ENCODE measurements at regions of chrX and their contacts with region 1.

Region 1: DNA sequence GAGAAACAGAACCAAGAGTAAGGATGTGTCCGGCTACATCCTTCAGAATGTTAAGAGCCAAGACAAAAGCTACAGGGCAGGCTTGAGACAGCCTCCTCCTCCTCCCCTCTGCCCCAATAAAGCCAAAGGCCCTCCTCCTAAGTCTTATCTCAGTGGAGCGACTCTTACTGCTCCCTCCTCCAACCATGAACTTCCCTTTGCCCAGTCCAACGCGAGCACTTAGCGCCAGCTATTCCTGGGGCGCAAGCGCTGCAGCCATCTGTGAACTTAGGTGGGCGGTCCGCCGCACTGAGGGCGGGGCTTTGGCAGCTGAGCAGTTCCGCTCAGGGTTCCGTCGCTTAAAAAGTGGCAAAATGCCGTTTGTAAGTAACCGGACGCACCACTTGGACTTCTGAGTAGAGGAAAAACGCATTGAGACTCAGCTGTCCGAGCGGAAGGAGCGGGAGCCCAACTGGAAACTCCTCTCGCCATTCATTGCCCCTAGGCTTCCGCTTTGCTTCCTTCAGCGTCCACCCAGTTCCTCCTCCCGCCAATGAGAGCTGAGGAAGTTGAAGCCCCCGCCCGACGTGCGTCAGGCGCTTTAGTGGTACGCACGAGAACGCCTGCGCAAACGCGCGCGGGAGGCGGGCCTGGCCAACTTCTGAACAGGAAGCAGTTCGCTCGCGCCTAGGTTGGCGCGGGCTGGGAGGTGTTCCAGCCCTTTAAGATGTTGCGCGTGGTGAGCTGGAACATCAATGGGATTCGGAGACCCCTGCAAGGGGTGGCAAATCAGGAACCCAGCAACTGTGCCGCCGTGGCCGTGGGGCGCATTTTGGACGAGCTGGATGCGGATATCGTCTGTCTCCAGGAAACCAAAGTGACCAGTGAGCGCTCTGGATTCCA is at the start of gene APEX2:
- DNase-seq: peak; percentile 89 to 97
- H3K4me3 ChIP-seq: peak within 1 kb of the TSS; percentile 51 to 58 (median 54)
- H3K27ac ChIP-seq: peak within 1 kb of the TSS; percentile 79 to 92 (median 89)
- H3K4me1 ChIP-seq: peaks cover 0 to 11% (median 4%) of the 10 kb centered on the region in 4 donors
- H3K27me3 ChIP-seq: no peaks in the 10 kb centered on the region
- CTCF ChIP-seq: no peak
- EP300 ChIP-seq: no peak
- POLR2A ChIP-seq: peak in 2 of 4 donors; percentile 22 to 31
- total RNA-seq, gene APEX2: 0.29 to 8.5 (median 7.5) TPM

Region 2: GRCh38 chrX:54798137-54798536 is 201.8 kb before region 1 on chrX and contains the start of gene ITIH6:
- intact Hi-C with region 1: loop called (anchors 5 kb)
- DNase-seq: peak in 1 of 2 donors; percentile 26
- H3K4me3 ChIP-seq: no peak within 1 kb of the TSS
- H3K27ac ChIP-seq: no peak within 1 kb of the TSS
- H3K4me1 ChIP-seq: no peaks in the 10 kb centered on the region
- H3K27me3 ChIP-seq: no peaks in the 10 kb centered on the region
- CTCF ChIP-seq: no peak
- EP300 ChIP-seq: no peak
- POLR2A ChIP-seq: no peak
- total RNA-seq, gene ITIH6: not detected

Region 3: GRCh38 chrX:54891573-54891972 is 108.4 kb before region 1 on chrX:
- intact Hi-C with region 1: no loop called
- DNase-seq: peak in 1 of 2 donors; percentile 37
- H3K4me3 ChIP-seq: no peak overlapping the region
- H3K27ac ChIP-seq: no peak overlapping the region
- H3K4me1 ChIP-seq: no peaks in the 10 kb centered on the region
- H3K27me3 ChIP-seq: no peaks in the 10 kb centered on the region
- CTCF ChIP-seq: peak in 1 of 7 experiments; percentile 28
- EP300 ChIP-seq: no peak
- POLR2A ChIP-seq: no peak

Measured in stomach (tissue), 19 donors.